T-cell (primary cell): ENCODE measurements at regions of chr7 and their contacts with region 1.

Region 1: DNA sequence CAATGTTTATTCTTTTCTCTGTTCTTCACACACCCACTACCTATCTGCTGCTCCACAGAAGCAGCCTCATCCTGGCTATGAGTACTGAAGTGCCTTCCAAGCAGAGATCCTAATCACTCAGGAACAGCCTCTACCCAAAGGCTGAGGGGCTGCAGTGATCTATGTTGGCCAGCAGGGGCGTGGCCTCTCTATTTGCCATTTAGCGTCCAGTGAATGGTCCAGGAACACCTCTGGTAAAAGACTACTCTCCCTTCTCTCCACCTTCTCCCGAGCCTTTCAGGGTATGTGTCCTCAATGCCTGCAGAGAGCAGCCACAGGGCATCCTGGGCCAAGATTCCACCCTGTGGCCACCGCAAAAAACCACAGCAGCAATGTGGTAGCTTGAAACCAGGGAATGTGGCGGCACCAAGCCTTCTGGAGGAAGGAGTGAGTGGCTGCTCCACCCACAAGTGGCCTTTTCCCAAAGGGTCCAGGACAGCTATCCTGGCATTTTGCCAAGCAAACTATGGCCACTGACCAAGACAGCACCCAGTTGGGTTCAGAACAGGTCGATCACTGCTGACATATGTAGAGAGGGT is 70.9 kb downstream of the SYPL1 start:
- DNase-seq: peak in 9 of 35 experiments; percentile 7 to 55 (median 31)
- ATAC-seq: peak in 3 of 4 experiments; percentile 22 to 32 (median 29)
- H3K4me3 ChIP-seq: no peak overlapping the region
- H3K4me3 Mint-ChIP-seq: peak overlapping the region in 1 of 3 donors; percentile 57
- H3K27ac ChIP-seq: no peak overlapping the region
- H3K27ac Mint-ChIP-seq: peak overlapping the region; percentile 40 to 69
- H3K4me1 ChIP-seq: peaks cover 13 to 33% of the 10 kb centered on the region in 2 experiments
- H3K4me1 Mint-ChIP-seq: peaks cover 36 to 51% (median 39%) of the 10 kb centered on the region in 3 donors
- H3K27me3 ChIP-seq: peaks cover 0 to 16% of the 10 kb centered on the region in 2 experiments
- H3K27me3 Mint-ChIP-seq: peaks cover 0 to 2% of the 10 kb centered on the region in 2 donors

Region 2: GRCh38 chr7:105691733-105692564 is 349.3 kb before region 1 on chr7:
- CTCF ChIA-PET with region 1: interaction called, 3 to 12 read pairs
- POLR2A ChIA-PET with region 1: no interaction called
- DNase-seq: peak; percentile 36 to 93 (median 86)
- ATAC-seq: peak; percentile 64 to 86 (median 74)
- H3K4me3 ChIP-seq: peak overlapping the region; percentile 78 to 86
- H3K4me3 Mint-ChIP-seq: peak overlapping the region; percentile 92 to 97 (median 96)
- H3K27ac ChIP-seq: peak overlapping the region; percentile 98
- H3K27ac Mint-ChIP-seq: peak overlapping the region; percentile 99 to 100
- H3K4me1 ChIP-seq: peaks cover 2 to 41% of the 10 kb centered on the region in 2 experiments
- H3K4me1 Mint-ChIP-seq: peaks cover 64 to 71% (median 68%) of the 10 kb centered on the region in 3 donors
- H3K27me3 ChIP-seq: no peaks in the 10 kb centered on the region
- H3K27me3 Mint-ChIP-seq: no peaks in the 10 kb centered on the region

Region 3: DNA sequence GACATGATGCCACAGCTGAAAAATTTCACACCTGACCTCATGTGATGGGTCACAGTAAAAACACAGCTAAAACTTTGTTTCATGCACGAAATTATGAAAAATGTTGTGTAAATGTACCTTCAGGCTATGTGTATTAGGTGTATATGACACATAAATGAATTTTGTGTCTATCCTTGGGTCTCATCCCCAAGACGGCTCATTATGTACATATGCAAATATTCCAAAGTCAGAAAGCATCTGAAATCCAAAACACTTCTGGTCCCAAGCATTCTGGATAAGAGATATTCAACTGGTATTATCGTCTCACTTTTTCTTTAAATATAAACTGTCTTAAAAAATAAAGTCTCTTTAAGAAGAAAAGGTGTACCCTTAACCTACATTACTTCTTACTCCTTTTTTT is 310.2 kb before region 1 on chr7:
- CTCF ChIA-PET with region 1: no interaction called
- POLR2A ChIA-PET with region 1: no interaction called
- DNase-seq: no peak
- ATAC-seq: no peak
- H3K4me3 ChIP-seq: no peak overlapping the region
- H3K4me3 Mint-ChIP-seq: no peak overlapping the region
- H3K27ac ChIP-seq: no peak overlapping the region
- H3K27ac Mint-ChIP-seq: no peak overlapping the region
- H3K4me1 ChIP-seq: no peaks in the 10 kb centered on the region
- H3K4me1 Mint-ChIP-seq: peaks cover 0 to 8% (median 2%) of the 10 kb centered on the region in 3 donors
- H3K27me3 ChIP-seq: no peaks in the 10 kb centered on the region
- H3K27me3 Mint-ChIP-seq: no peaks in the 10 kb centered on the region